Activated B cell treated with CpG ODN at 0.5 μM for 24 hours (primary cell): ENCODE measurements at regions of chr5 and their contacts with region 1.

Region 1: GRCh38 chr5:132490486-132491367 is at the start of gene IRF1:
- DNase-seq: peak; percentile 98
- ATAC-seq: peak; percentile 71
- H3K4me3 Mint-ChIP-seq: peak within 1 kb of the TSS; percentile 95
- H3K27ac Mint-ChIP-seq: peak within 1 kb of the TSS; percentile 93
- H3K4me1 Mint-ChIP-seq: peaks cover 82% of the 10 kb centered on the region
- H3K27me3 Mint-ChIP-seq: no peaks in the 10 kb centered on the region
- CTCF ChIP-seq: no peak
- total RNA-seq, gene IRF1: 126 and 134 TPM in 2 replicates

Region 2: DNA sequence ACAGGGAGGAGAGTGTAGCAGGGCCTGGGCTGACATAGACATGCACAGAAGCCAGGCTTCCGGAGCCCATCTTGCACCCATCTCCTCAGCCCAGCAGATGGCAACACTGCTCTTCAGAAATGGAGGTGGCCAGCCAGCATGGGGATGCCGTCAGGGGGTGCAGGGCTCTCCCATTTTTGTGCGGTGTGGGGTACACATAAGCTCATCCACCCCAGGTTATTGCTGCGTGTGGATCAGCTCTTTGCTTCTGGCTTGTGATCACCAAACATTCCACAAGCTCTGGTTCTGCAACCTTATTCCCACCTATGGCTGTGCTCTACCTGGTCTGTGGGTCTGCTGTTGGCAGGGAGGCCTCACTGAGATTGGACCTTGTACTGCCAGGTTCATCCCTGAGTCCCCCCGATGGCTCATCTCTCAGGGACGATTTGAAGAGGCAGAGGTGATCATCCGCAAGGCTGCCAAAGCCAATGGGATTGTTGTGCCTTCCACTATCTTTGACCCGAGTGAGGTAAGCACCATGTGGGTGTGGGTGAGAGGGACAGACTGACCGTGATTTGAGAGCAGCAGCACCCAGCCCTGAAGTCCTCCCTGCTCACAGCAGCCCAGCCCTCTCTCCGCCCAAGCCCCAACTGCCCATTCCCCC is 104.0 kb before region 1 on chr5:
- CTCF ChIA-PET with region 1: interaction called, 253 read pairs
- POLR2A ChIA-PET with region 1: interaction called, 29 read pairs
- intact Hi-C with region 1: no loop called
- DNase-seq: peak; percentile 62
- ATAC-seq: peak; percentile 92
- H3K4me3 Mint-ChIP-seq: no peak overlapping the region
- H3K27ac Mint-ChIP-seq: peak overlapping the region; percentile 39
- H3K4me1 Mint-ChIP-seq: peaks cover 21% of the 10 kb centered on the region
- H3K27me3 Mint-ChIP-seq: no peaks in the 10 kb centered on the region
- CTCF ChIP-seq: no peak

Region 3: GRCh38 chr5:132410451-132411381 is 80.0 kb before region 1 on chr5:
- CTCF ChIA-PET with region 1: interaction called, 13 read pairs
- POLR2A ChIA-PET with region 1: interaction called, 246 read pairs
- intact Hi-C with region 1: loop called (anchors 1 kb)
- DNase-seq: peak; percentile 85
- ATAC-seq: peak; percentile 86
- H3K4me3 Mint-ChIP-seq: peak overlapping the region; percentile 94
- H3K27ac Mint-ChIP-seq: peak overlapping the region; percentile 99
- H3K4me1 Mint-ChIP-seq: peaks cover 75% of the 10 kb centered on the region
- H3K27me3 Mint-ChIP-seq: no peaks in the 10 kb centered on the region
- CTCF ChIP-seq: no peak

Region 4: GRCh38 chr5:132426525-132427138 is 64.1 kb before region 1 on chr5:
- CTCF ChIA-PET with region 1: interaction called, 47 read pairs
- POLR2A ChIA-PET with region 1: interaction called, 461 read pairs
- intact Hi-C with region 1: loop called (anchors 1 kb)
- DNase-seq: peak; percentile 60
- ATAC-seq: peak; percentile 44
- H3K4me3 Mint-ChIP-seq: peak overlapping the region; percentile 62
- H3K27ac Mint-ChIP-seq: peak overlapping the region; percentile 91
- H3K4me1 Mint-ChIP-seq: peaks cover 100% of the 10 kb centered on the region
- H3K27me3 Mint-ChIP-seq: no peaks in the 10 kb centered on the region
- CTCF ChIP-seq: no peak

Region 5: GRCh38 chr5:132456296-132457001 is 34.3 kb before region 1 on chr5:
- CTCF ChIA-PET with region 1: interaction called, 27 read pairs
- POLR2A ChIA-PET with region 1: interaction called, 164 read pairs
- intact Hi-C with region 1: loop called (anchors 1 kb)
- DNase-seq: peak; percentile 56
- ATAC-seq: peak; percentile 78
- H3K4me3 Mint-ChIP-seq: peak overlapping the region; percentile 75
- H3K27ac Mint-ChIP-seq: peak overlapping the region; percentile 99
- H3K4me1 Mint-ChIP-seq: peaks cover 92% of the 10 kb centered on the region
- H3K27me3 Mint-ChIP-seq: no peaks in the 10 kb centered on the region
- CTCF ChIP-seq: no peak

Region 6: DNA sequence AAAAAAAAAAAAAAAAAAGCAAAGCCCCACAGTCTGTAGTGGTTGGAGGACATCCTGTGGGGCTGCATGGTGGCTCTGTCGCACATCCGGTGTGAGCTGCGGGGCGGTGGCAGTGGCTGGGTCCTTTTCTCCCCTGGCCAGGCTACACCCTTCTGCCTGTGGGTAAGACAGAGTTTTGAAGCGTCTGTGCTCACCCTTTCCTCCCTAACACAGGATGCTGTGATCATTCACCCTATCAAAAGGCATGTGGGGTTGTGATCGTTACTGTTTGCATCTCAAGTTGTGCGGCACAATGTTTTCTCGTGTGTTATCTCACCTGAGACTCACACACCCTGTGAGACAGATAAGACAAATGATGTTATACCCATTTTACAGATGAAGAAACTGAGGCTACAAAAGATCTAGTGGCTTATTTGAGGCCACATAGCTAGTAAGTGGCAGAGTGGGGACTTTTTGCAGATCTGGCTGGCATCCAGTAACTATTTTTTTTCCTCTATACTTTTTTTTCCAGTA is 17.7 kb before region 1 on chr5:
- CTCF ChIA-PET with region 1: interaction called, 25 read pairs
- POLR2A ChIA-PET with region 1: interaction called, 286 read pairs
- intact Hi-C with region 1: loop called (anchors 1 kb)
- DNase-seq: peak; percentile 50
- ATAC-seq: peak; percentile 87
- H3K4me3 Mint-ChIP-seq: peak overlapping the region; percentile 50
- H3K27ac Mint-ChIP-seq: peak overlapping the region; percentile 91
- H3K4me1 Mint-ChIP-seq: peaks cover 78% of the 10 kb centered on the region
- H3K27me3 Mint-ChIP-seq: no peaks in the 10 kb centered on the region
- CTCF ChIP-seq: no peak

Region 7: GRCh38 chr5:132526290-132526973 is 35.7 kb after region 1 on chr5:
- CTCF ChIA-PET with region 1: no interaction called
- POLR2A ChIA-PET with region 1: interaction called, 10 read pairs
- intact Hi-C with region 1: no loop called
- DNase-seq: peak; percentile 26
- ATAC-seq: peak; percentile 51
- H3K4me3 Mint-ChIP-seq: peak overlapping the region; percentile 25
- H3K27ac Mint-ChIP-seq: peak overlapping the region; percentile 27
- H3K4me1 Mint-ChIP-seq: peaks cover 53% of the 10 kb centered on the region
- H3K27me3 Mint-ChIP-seq: no peaks in the 10 kb centered on the region
- CTCF ChIP-seq: peak; percentile 69

Region 8: DNA sequence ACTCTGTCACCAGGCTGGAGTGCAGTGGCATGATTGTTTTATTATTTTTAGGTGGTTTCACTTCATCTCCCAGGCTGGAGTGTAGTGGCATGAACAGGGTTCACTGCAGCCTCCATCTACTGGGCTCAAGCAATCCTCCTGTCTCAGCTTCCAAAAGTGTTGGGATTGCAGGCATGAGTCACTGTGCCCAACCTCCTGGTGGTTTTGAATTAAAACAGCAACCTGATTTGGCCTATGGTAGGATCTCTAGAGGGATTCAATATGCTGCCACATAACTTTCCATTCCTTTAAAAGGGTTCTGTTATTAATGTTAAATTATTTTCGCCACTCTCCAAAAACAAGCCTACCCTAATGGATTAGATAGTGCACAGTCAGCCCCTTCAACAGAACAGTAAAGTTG is 551.2 kb after region 1 on chr5:
- CTCF ChIA-PET with region 1: no interaction called
- POLR2A ChIA-PET with region 1: no interaction called
- intact Hi-C with region 1: no loop called
- DNase-seq: no peak
- ATAC-seq: no peak
- H3K4me3 Mint-ChIP-seq: no peak overlapping the region
- H3K27ac Mint-ChIP-seq: no peak overlapping the region
- H3K4me1 Mint-ChIP-seq: peaks cover 22% of the 10 kb centered on the region
- H3K27me3 Mint-ChIP-seq: no peaks in the 10 kb centered on the region
- CTCF ChIP-seq: no peak